Sciatic nerve (tissue), 2 donors: ENCODE measurements at regions of chr17 and their contacts with region 1.

Region 1: GRCh38 chr17:45688353-45688752 is 95.8 kb upstream of the CRHR1 start:
- DNase-seq: no peak
- ATAC-seq: peak; percentile 49

Region 2: DNA sequence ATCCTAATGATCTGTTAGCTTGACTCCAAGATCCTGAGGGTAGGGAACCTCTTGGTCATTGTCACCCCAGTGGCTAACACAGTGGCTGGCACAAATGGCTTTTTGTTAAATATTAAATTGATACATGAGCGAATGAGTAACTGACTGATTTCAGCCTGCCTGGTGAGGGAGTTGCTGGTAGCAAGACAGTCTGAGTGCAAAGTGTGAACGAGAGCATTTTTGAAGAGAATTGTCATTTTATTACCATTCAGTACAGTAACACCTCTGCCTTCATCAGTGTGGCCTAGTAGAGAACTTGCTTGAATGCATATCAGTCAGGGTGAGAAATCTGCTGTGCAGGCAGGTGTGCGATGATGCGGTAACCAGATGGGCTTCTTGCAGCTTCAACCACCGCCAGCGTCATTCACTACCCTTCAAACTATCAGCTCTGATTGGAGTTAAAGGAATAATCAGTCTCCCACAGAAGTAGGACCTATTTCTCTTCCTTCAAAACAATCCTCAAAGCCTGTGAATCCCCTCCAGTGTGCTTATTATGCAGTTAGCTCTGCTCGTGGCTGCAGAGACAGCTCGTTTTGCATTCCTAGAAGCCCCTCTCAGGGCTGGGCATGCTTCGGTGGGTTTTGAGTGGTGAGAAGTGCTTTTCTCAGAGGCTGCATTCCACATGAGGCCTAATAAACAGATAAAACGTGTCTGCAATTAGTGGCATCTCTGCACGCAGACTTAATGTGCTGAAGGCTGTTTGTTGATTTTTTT is 497.7 kb before region 1 on chr17:
- intact Hi-C with region 1: no loop called
- DNase-seq: no peak
- ATAC-seq: no peak

Region 3: GRCh38 chr17:45277216-45277849 is 411.0 kb before region 1 on chr17:
- intact Hi-C with region 1: no loop called
- DNase-seq: peak; percentile 95
- ATAC-seq: peak; percentile 85

Region 4: GRCh38 chr17:45759761-45760160 is 71.4 kb after region 1 on chr17:
- intact Hi-C with region 1: loop called (anchors 10 kb)
- DNase-seq: no peak
- ATAC-seq: no peak

Region 5: DNA sequence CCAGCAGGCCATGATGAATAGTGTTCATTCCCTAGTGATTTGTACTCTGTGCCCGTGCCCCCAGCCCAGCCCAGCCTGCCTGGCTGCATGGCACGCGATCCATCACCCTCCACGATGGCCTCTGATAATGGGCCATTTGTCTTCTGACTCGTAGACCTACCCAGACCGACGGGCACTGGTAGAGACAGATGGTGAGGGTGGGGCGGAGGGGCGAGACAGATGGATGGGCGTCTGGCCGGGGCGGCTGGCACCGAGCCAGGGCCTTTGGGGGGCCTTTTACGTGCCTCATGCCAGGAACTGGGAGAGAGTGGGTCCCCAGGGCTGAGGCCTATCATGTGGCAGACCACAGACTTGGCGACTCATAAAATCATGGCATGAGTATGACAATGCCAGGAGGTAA is 121.1 kb after region 1 on chr17:
- intact Hi-C with region 1: no loop called
- DNase-seq: no peak
- ATAC-seq: no peak

Region 6: DNA sequence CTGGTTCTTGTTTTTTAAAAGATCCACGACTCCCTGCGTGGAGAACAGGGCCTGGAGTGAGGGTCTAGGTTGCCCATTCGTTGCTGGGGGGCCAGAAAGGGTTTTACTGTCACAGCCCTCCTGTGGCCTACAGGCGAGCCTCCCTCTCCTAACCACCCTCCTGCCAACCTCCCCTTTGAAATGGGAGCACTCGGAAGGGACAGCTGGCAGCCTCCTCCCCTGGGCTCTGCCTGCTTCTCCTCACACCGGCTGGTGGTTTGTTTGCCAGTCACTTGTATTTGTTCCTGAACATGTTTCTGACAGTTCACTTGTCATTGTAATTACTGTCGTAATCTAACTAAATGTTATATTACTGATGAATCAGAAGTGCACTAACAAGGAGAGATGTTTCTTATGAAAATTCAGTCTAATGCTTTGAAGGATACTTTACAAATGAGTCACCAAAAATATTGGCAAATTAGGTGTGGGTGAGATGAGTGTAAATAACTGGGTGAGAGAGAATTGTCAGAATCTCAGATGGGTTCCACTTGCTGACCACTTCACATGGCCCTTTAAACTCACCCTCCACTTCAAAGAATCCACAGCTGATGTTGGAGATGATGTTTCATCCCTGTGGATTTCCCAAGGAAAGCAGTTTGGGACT is 153.7 kb after region 1 on chr17:
- intact Hi-C with region 1: no loop called
- DNase-seq: no peak
- ATAC-seq: no peak